Activated CD4-positive, alpha-beta T cell treated with anti-CD3 and anti-CD28 coated beads, Interleukin-2, amount 10 ng/mL, durations not matched to agents 7 days and 5 days (primary cell): ENCODE measurements at regions of chr22 and their contacts with region 1.

Region 1: GRCh38 chr22:31970490-31971444 is 26.4 kb downstream of the YWHAH start:
- DNase-seq: peak; percentile 86
- H3K4me3 Mint-ChIP-seq: peak overlapping the region; percentile 70
- H3K27ac Mint-ChIP-seq: peak overlapping the region; percentile 72
- H3K4me1 Mint-ChIP-seq: peaks cover 13% of the 10 kb centered on the region
- H3K27me3 Mint-ChIP-seq: no peaks in the 10 kb centered on the region

Region 2: GRCh38 chr22:31917227-31917921 is 53.4 kb before region 1 on chr22:
- CTCF ChIA-PET with region 1: no interaction called
- POLR2A ChIA-PET with region 1: no interaction called
- DNase-seq: no peak
- H3K4me3 Mint-ChIP-seq: no peak overlapping the region
- H3K27ac Mint-ChIP-seq: no peak overlapping the region
- H3K4me1 Mint-ChIP-seq: peaks cover 13% of the 10 kb centered on the region
- H3K27me3 Mint-ChIP-seq: no peaks in the 10 kb centered on the region

Region 3: GRCh38 chr22:31954535-31955523 is 15.9 kb before region 1 on chr22:
- CTCF ChIA-PET with region 1: interaction called, 22 read pairs
- POLR2A ChIA-PET with region 1: no interaction called
- DNase-seq: no peak
- H3K4me3 Mint-ChIP-seq: no peak overlapping the region
- H3K27ac Mint-ChIP-seq: peak overlapping the region; percentile 17
- H3K4me1 Mint-ChIP-seq: peaks cover 72% of the 10 kb centered on the region
- H3K27me3 Mint-ChIP-seq: no peaks in the 10 kb centered on the region

Region 4: GRCh38 chr22:31995046-31995445 is 24.3 kb after region 1 on chr22:
- CTCF ChIA-PET with region 1: no interaction called
- POLR2A ChIA-PET with region 1: no interaction called
- DNase-seq: no peak
- H3K4me3 Mint-ChIP-seq: no peak overlapping the region
- H3K27ac Mint-ChIP-seq: no peak overlapping the region
- H3K4me1 Mint-ChIP-seq: no peaks in the 10 kb centered on the region
- H3K27me3 Mint-ChIP-seq: peaks cover 26% of the 10 kb centered on the region

Region 5: GRCh38 chr22:32265882-32266767 is 295.4 kb after region 1 on chr22:
- CTCF ChIA-PET with region 1: interaction called, 11 read pairs
- POLR2A ChIA-PET with region 1: no interaction called
- DNase-seq: peak; percentile 80
- H3K4me3 Mint-ChIP-seq: no peak overlapping the region
- H3K27ac Mint-ChIP-seq: no peak overlapping the region
- H3K4me1 Mint-ChIP-seq: peaks cover 6% of the 10 kb centered on the region
- H3K27me3 Mint-ChIP-seq: no peaks in the 10 kb centered on the region